ENCODE measurements at regions of chr7 and their contacts with region 1.

Region 1: GRCh38 chr7:31443457-31443856 is 70.4 kb upstream of the ITPRID1 start:
- DNase-seq: peak; percentile 46
- H3K4me3 ChIP-seq: no peak overlapping the region
- H3K27ac ChIP-seq: no peak overlapping the region
- H3K4me1 ChIP-seq: no peaks in the 10 kb centered on the region
- H3K27me3 ChIP-seq: no peaks in the 10 kb centered on the region
- CTCF ChIP-seq: peak; percentile 76 to 81

Region 2: DNA sequence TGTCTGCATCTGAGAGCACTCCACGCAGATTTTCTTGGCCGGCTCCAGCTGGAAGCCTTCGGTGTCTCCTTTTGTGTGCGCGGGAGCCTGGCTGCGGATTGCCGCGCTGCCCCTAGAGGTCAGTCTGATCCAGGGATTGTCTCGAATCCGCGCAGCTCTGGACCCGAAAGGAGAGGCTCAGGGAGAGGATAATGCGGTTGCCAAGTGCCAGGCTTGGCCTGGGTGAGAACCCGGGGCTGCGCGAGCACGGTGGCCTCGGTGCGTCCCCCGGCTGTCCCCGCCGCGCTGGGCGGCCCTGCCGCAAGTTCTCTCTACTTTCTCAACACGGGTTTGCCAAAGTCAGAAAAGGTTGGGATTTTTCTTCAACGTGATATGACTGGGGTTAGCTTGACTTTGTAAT is 250.5 kb before region 1 on chr7:
- CTCF ChIA-PET with region 1: no interaction called
- dilution Hi-C with region 1: no loop called
- in situ Hi-C with region 1: no loop called
- intact Hi-C with region 1: loop called (anchors 1 kb)
- DNase-seq: peak; percentile 52
- H3K4me3 ChIP-seq: no peak overlapping the region
- H3K27ac ChIP-seq: no peak overlapping the region
- H3K4me1 ChIP-seq: no peaks in the 10 kb centered on the region
- H3K27me3 ChIP-seq: no peaks in the 10 kb centered on the region
- CTCF ChIP-seq: peak; percentile 83 to 93

Region 3: GRCh38 chr7:31271621-31272405 is 171.6 kb before region 1 on chr7:
- CTCF ChIA-PET with region 1: no interaction called
- dilution Hi-C with region 1: no loop called
- in situ Hi-C with region 1: no loop called
- intact Hi-C with region 1: no loop called
- DNase-seq: no peak
- H3K4me3 ChIP-seq: no peak overlapping the region
- H3K27ac ChIP-seq: no peak overlapping the region
- H3K4me1 ChIP-seq: no peaks in the 10 kb centered on the region
- H3K27me3 ChIP-seq: no peaks in the 10 kb centered on the region
- CTCF ChIP-seq: no peak

Region 4: DNA sequence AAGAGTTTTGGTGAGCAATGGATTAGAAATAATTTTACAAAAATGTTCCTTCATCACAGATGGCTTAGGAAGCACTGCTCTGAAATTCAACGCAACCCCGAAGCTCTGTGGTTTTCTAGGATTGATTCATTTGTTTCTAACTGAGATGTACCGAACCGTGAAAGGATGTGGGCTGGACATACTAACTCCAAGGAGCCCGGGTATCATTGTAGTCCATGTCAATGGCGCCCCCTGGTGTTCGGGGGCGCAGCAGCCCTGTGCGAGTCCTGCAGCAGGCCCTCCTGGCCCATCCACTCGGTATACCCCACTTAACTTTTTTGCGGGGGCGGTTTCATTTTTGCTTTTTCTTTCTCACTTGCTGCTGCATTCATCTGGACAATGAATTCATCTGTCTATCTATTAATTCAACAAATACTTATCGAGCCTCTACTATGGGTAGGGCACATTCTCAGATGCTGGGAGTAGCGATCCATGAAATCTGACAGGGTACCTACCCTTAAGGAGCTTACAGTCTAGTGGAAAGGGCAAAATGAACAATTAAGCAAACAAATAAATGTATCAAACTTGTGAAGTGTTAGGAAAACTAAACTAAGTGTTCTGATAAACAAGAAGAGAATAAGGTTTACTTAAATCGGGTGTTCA is 45.2 kb after region 1 on chr7:
- CTCF ChIA-PET with region 1: interaction called, 4 read pairs
- dilution Hi-C with region 1: no loop called
- in situ Hi-C with region 1: no loop called
- intact Hi-C with region 1: loop called (anchors 1 kb)
- DNase-seq: peak; percentile 57
- H3K4me3 ChIP-seq: no peak overlapping the region
- H3K27ac ChIP-seq: no peak overlapping the region
- H3K4me1 ChIP-seq: peaks cover 21% of the 10 kb centered on the region
- H3K27me3 ChIP-seq: no peaks in the 10 kb centered on the region
- CTCF ChIP-seq: peak; percentile 70 to 80

Region 5: GRCh38 chr7:32191305-32191704 is 747.8 kb after region 1 on chr7:
- CTCF ChIA-PET with region 1: no interaction called
- dilution Hi-C with region 1: no loop called
- in situ Hi-C with region 1: no loop called
- intact Hi-C with region 1: no loop called
- DNase-seq: no peak
- H3K4me3 ChIP-seq: no peak overlapping the region
- H3K27ac ChIP-seq: no peak overlapping the region
- H3K4me1 ChIP-seq: no peaks in the 10 kb centered on the region
- H3K27me3 ChIP-seq: no peaks in the 10 kb centered on the region
- CTCF ChIP-seq: no peak